Right cardiac atrium (tissue), 5 donors: ENCODE measurements at regions of chr1 and their contacts with region 1.

Region 1: DNA sequence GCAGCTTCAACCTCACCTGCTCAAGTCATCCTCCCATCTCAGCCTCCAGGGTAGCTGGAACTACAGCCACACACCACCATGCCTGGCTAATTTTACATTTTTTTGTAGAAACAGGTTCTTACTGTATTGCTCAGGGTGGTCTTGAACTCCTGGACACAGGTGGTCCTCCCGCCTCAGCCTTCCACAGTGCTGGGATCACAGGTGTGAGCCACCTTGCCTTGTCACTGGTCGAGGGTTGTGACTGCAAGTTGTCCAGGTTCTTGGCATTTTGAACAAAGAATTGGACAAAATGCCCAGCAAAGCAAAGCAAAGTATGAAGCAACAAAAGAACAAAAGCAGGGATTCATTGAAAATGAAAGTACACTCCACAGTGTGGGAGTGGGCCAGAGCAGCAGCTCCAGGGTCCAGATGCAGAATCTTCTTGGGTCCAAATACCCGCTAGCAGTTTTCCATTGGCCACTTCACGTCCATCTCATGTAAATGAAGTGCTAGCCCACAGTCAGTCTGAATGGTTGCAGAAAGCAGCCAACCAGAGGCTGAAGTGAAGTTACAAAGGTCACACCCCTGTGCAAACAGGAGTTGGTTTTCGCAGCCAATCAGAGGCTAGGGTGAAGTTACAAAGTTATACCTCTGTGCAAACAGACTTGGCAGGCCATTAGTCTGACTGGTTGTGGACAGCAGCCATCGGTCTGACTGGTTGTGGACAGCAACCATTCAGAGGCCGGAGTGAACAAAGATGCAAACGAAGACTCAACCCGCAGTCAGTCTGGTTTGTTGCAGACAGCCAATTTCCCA is 109.5 kb upstream of the KIF26B start:
- DNase-seq: peak in 1 of 3 donors; percentile 73
- ATAC-seq: peak in 1 of 2 donors; percentile 57
- H3K4me3 ChIP-seq: no peak overlapping the region
- H3K27ac ChIP-seq: peak overlapping the region; percentile 38
- H3K4me1 ChIP-seq: no peaks in the 10 kb centered on the region
- H3K27me3 ChIP-seq: no peaks in the 10 kb centered on the region

Region 2: GRCh38 chr1:244599937-244600350 is 445.3 kb before region 1 on chr1:
- intact Hi-C with region 1: loop called in 2 of 4 experiments (anchors 10 kb)
- DNase-seq: no peak
- ATAC-seq: peak; percentile 41 to 70
- H3K4me3 ChIP-seq: no peak overlapping the region
- H3K27ac ChIP-seq: no peak overlapping the region
- H3K4me1 ChIP-seq: no peaks in the 10 kb centered on the region
- H3K27me3 ChIP-seq: no peaks in the 10 kb centered on the region

Region 3: GRCh38 chr1:244614113-244614836 is 431.0 kb before region 1 on chr1:
- intact Hi-C with region 1: loop called in 3 of 4 experiments (anchors 10 kb)
- DNase-seq: peak in 2 of 3 donors; percentile 23 to 54
- ATAC-seq: no peak
- H3K4me3 ChIP-seq: no peak overlapping the region
- H3K27ac ChIP-seq: no peak overlapping the region
- H3K4me1 ChIP-seq: no peaks in the 10 kb centered on the region
- H3K27me3 ChIP-seq: no peaks in the 10 kb centered on the region

Region 4: DNA sequence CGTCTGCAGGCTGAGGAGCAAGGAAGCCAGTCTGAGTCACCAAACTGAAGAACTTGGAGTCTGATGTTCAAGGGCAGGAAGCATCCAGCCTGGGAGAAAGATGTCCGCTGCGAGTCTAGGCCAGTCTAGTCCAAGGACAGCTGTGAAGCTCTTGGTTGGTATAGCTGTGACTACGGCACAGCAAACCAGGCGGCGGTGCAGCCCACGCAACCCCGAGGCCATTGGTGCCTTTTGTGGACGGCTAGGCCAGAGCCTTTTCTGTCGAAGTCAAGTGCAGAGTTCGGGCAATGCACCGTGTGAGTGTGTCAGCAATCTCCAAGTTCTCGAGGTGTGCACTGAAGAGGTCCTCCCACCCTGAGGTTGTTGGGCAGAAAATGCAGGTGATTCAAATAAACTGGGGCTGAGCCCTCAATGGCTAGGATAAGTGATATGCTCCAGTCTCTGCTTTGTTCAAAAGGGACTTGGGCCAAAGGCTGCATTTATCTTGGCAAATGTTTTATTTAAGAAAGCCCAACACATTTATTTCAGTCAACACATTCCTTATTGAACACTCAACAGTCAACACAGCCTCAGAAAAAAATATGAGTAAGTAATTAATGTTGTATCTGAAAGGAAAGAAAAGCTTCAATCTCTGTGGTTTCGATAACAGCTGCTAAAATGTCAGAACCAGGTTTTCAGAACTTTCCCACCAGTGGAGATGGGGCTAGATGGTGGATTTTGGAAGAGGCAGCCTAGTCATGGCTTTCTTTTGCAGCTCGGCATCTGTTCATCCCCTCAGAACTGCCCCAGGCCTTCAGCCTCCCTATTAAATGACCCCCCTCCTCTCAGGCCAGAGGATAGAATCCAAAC is 288.0 kb before region 1 on chr1:
- intact Hi-C with region 1: no loop called
- DNase-seq: no peak
- ATAC-seq: no peak
- H3K4me3 ChIP-seq: no peak overlapping the region
- H3K27ac ChIP-seq: no peak overlapping the region
- H3K4me1 ChIP-seq: no peaks in the 10 kb centered on the region
- H3K27me3 ChIP-seq: no peaks in the 10 kb centered on the region

Region 5: GRCh38 chr1:244796718-244797406 is 248.4 kb before region 1 on chr1:
- intact Hi-C with region 1: loop called in 2 of 4 experiments (anchors 5 kb)
- DNase-seq: peak in 1 of 3 donors; percentile 63
- ATAC-seq: peak; percentile 65 to 67
- H3K4me3 ChIP-seq: no peak overlapping the region
- H3K27ac ChIP-seq: no peak overlapping the region
- H3K4me1 ChIP-seq: no peaks in the 10 kb centered on the region
- H3K27me3 ChIP-seq: no peaks in the 10 kb centered on the region

Region 6: DNA sequence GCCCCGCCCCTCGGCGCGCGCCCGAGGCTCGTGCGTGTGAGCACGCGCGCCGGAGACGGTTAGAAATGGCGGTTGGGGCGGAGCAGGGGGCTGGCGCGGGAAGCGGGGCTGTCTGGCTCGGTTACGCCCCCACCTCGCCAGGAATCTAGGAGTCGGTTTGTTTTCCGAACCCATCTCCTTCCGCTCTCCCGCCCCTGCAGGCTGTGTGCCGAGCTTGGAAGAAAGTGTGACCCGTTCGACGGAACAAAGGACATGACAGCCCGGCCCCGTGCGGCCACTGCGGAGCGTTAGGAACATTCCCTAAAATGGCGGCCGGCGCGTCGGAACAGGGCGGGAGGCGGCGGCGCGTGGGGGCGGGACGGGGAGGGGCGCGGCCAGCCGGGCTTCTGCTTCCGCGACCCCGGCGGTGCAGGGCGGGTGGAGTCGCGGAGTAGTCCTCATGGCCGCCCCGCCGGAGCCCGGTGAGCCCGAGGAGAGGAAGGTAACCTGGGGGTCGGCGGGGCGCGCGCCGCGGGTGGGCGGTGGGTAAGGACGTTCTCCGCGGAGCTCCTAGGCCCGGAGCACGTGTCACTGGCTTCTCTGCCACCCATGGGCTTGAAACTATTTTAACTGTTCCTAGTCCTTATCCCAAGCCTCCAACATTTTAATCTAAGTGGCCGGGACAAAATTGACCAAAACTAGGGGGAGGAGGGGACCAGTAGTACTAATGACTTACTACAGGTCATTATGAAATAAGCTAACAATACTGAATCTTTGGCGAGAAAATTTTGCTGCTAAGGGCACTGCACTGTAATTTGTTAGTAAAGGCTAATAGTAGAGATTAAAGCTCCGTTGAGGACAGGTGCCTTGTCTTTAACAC is 209.8 kb before region 1 on chr1 and contains the start of gene COX20:
- intact Hi-C with region 1: loop called in 1 of 4 experiments (anchors 10 kb)
- DNase-seq: peak; percentile 91 to 98 (median 97)
- ATAC-seq: peak; percentile 91 to 93
- H3K4me3 ChIP-seq: peak within 1 kb of the TSS; percentile 95
- H3K27ac ChIP-seq: peak within 1 kb of the TSS; percentile 93
- H3K4me1 ChIP-seq: peaks cover 4% of the 10 kb centered on the region
- H3K27me3 ChIP-seq: no peaks in the 10 kb centered on the region
- total RNA-seq, gene COX20: 57.8 to 68.5 (median 63.0) TPM

Region 7: DNA sequence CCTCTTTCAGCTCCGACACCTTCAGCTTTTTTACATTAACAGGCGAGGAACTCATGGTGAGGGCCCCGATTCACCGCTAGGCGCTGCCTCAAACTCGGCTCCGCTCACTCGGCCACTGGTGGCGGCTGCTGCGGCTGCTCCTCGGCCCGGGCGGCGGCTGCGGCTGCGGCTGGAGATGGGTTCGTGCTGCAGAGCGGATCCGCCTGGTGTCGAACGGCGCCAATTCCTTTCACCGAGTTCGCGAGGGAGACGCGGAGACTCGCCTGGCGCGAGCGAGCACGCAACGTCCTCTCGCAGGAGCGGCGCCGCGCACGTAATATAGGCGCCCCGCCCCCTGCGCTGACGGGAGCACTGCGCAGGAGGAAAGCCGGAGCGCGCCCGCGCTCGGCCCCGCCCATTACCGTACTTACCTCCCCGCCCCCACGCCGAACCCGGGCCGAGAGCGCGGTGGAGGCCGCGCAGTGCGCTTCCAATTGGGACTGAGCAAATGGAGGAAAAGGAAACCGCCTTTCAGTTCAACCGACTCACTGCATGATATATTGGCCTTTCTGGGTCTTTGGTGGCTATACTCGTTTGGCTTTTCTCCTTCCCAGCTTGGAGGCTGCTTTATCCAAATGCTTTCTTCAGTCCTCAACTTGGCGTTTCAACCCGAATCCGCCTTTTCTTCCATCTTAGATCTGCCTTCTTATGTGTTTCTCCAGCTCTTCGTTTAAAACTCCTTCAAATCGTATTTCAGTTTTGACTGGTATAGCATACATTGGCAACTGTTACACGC is 180.8 kb before region 1 on chr1 and contains the start of gene HNRNPU:
- intact Hi-C with region 1: loop called in 2 of 4 experiments (anchors 5 to 10 kb)
- DNase-seq: peak; percentile 98 to 100 (median 99)
- ATAC-seq: peak; percentile 95 to 96
- H3K4me3 ChIP-seq: peak within 1 kb of the TSS; percentile 90
- H3K27ac ChIP-seq: peak within 1 kb of the TSS; percentile 98
- H3K4me1 ChIP-seq: peaks cover 5% of the 10 kb centered on the region
- H3K27me3 ChIP-seq: no peaks in the 10 kb centered on the region
- total RNA-seq, gene HNRNPU: 180 to 194 (median 184) TPM

Region 8: DNA sequence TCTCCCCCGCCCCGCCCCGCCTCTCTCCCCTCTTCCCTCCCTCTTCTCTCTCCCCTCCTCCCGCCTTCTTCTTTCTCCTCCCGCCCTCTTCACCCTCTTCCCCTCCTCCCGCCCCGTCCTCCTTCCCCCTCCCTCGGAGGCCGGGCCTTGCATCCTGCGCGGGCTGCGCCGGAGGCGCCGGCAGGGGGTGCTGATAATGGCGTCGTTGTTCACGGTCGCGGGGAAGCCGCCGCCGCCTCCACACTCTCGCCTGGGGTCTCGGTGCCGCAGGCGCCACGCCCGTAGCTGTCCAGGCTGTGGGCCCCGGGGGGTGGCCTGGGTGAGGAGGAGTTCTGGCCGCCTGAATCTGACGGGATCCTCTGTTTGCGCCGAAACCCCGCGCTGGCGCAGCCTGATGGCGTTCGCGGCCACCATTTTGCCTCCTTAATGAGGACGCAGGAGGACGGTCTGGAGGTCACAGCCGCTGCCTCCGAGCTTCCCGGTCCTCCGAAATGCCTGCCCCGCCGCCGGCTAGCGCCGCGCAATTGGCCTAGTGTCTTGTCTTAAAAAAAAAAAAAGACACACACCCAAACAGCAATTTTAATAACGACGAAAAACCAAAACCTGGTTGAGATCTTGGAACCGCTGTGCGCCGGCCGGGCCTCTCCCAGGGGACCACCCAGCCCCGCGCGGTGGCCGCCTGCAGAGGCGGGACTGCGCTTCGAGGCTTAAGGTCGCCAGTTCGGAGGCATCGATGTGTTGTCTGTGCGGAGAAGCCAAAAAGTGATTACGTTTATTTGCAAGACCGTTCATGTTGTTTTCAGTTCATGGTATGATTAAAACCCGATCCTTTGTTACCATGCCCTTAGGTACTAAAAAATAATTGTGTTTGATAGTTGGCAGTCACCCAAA is 74.4 kb before region 1 on chr1:
- intact Hi-C with region 1: loop called in 1 of 4 experiments (anchors 10 kb)
- DNase-seq: peak; percentile 92 to 98 (median 97)
- ATAC-seq: peak; percentile 94 to 95
- H3K4me3 ChIP-seq: peak overlapping the region; percentile 77
- H3K27ac ChIP-seq: peak overlapping the region; percentile 100
- H3K4me1 ChIP-seq: peaks cover 5% of the 10 kb centered on the region
- H3K27me3 ChIP-seq: no peaks in the 10 kb centered on the region

Region 9: DNA sequence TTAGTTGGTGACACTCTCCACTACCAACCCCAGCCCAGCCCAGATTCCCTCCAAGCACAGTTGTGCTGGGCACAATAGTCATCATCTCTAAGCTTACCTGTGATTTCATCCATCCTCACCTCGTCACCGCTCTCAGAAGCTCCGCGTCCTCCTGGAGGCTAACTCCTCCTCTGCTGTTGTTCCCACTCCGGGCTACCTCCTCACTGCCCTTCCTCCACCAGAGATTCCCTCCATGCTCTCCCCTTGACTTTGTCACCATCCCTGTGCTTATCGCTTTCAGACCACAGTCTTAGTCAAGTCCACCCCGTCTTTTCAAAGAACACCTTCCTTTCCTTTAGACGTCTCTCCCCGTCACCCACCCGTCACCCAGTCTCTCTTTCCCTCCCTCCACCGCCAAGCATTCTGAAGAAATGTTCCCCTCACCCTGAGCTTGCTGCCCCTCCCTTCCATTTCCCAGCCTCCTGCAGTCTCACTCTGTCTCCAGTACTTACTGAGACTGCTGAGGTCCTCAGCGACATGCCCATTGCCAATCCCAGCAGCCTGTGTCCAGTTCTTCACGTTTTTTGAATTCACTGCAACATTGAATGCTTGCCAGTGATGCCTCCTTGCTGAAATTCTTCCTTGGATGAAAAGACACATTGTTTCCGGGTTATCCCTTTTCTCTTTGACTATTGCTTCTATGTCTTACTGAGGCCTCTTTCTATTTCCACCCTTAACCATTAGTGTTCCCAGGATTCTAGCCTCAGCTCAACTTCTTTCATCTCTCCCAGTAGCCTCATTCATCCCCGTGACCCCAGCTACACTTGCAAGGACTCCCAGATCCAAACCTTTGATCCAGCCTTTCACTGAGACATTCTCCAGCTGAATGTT is 62.7 kb after region 1 on chr1:
- intact Hi-C with region 1: no loop called
- DNase-seq: no peak
- ATAC-seq: no peak
- H3K4me3 ChIP-seq: no peak overlapping the region
- H3K27ac ChIP-seq: no peak overlapping the region
- H3K4me1 ChIP-seq: no peaks in the 10 kb centered on the region
- H3K27me3 ChIP-seq: no peaks in the 10 kb centered on the region